Esophagus muscularis mucosa (tissue), 4 donors: ENCODE measurements at regions of chr1 and their contacts with region 1.

Region 1: DNA sequence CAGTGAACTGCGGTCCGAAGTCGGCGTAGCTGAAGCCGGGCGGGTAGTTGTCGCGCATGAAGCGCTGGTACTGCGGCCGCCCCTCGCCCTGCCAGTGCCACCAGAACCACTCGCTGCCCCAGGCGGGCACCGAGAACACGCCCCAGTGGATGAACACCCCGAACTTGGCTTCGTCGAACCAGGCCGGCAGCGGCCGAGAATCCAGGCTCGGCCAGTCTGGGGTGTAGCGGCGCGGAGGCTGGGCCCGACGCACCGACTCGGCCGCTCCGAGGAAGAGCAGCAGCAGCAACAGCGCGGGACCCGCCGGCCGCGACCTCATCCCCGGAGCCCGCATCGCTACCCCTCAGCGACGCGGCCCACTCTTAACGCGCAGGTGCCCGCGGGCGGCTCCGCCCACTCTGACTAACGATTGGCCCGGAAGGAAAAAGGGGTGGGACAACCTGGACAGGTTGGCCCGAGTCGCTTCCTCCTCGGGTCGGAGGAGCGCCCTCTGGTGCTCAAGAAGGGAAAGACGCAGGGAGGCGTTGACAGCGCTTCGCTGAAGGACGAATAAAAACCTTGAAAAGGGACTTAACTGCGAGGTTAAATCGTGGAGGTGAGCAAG is at the start of gene FUCA1:
- DNase-seq: peak; percentile 98
- H3K4me3 ChIP-seq: peak within 1 kb of the TSS; percentile 72 to 92 (median 86)
- H3K27ac ChIP-seq: peak within 1 kb of the TSS; percentile 57 to 82 (median 77)
- H3K4me1 ChIP-seq: peaks cover 17 to 34% (median 22%) of the 10 kb centered on the region in 4 donors
- H3K27me3 ChIP-seq: no peaks in the 10 kb centered on the region
- CTCF ChIP-seq: peak; percentile 94 to 96 (median 96)
- EP300 ChIP-seq: no peak
- POLR2A ChIP-seq: peak; percentile 66
- total RNA-seq, gene FUCA1: 20.0 to 25.9 (median 25.2) TPM

Region 2: DNA sequence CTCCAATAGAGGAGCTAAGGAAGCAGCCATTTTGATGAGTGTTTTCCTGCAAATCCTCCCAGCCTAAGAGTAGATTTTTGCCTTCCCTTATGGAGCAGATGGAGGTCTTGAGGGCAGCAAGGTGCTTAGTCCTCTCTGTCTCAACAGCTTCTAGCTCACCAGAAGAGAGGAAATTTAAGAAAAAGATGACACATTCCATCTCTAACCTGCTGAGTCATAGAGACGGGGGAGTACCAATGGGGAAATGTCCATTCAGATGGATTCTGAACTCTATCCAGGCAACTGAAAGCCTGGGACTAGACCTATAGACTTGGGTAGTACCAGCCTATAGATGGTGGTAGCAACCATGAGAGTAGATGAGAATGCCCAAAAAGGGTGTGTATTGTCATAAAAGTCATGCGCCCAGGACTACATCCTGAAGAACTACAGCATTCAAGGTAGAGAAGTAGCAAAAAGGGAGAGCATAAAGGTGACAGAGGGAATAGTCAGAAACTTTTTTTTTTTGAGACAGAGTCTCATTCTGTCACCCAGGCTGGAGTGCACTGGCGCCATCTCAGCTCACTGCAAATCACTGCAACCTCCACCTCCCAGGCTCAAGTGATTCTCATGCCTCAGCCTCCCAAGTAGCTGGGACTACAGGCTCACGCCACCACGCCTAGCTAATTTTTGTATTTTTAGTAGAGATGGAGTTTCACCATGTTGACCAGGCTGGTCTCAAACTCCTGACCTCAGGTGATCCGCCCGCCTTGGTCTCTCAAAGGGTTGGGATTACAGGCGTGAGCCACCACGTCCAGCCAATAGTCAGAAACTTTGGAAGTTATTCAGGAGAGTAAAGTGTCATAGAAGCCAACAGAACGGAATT is 135.5 kb before region 1 on chr1:
- intact Hi-C with region 1: no loop called
- DNase-seq: no peak
- H3K4me3 ChIP-seq: no peak overlapping the region
- H3K27ac ChIP-seq: no peak overlapping the region
- H3K4me1 ChIP-seq: peaks cover under 1 to 5% (median 5%) of the 10 kb centered on the region in 4 donors
- H3K27me3 ChIP-seq: no peaks in the 10 kb centered on the region
- CTCF ChIP-seq: no peak
- EP300 ChIP-seq: no peak
- POLR2A ChIP-seq: no peak

Region 3: DNA sequence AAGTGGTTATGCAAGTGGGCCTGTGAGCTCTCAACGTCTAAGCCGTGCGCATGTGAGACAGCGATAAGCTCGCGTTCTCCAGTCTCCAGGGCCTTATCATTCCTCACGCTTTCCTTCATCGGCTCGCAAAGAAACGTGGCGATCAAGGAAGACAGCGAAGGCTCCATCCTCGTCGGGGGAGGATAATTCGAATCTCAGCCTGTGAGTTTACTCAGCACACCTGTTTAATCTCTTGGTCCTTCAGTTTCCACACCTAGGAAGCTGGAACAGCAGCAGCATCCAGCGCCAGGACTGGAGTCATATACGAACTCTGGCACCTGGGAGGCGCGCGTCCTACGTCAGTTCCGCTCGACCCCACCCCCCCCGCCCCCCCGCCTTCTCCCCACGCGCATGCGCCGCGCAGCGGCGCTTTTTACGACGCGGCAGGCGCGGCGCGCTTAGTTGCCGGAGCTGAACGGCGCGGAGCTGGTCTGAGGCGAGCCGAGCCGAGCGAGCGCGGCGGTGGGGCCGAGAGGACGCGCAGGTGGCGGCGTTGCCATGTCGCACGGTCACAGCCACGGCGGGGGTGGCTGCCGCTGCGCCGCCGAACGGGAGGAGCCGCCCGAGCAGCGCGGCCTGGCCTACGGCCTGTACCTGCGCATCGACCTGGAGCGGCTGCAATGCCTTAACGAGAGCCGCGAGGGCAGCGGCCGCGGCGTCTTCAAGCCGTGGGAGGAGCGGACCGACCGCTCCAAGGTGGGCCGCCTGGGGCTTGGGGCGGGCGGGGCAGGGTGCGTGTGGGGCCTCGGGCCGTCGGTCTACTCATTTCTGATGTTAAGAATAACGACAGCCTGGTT is 89.9 kb before region 1 on chr1 and contains the start of gene PITHD1:
- intact Hi-C with region 1: loop called (anchors 5 kb)
- DNase-seq: peak; percentile 95
- H3K4me3 ChIP-seq: peak within 1 kb of the TSS; percentile 75 to 100 (median 96)
- H3K27ac ChIP-seq: peak within 1 kb of the TSS; percentile 86 to 95 (median 91)
- H3K4me1 ChIP-seq: peaks cover 20 to 43% (median 30%) of the 10 kb centered on the region in 4 donors
- H3K27me3 ChIP-seq: no peaks in the 10 kb centered on the region
- CTCF ChIP-seq: no peak
- EP300 ChIP-seq: peak; percentile 3
- POLR2A ChIP-seq: peak; percentile 73
- total RNA-seq, gene PITHD1: 43.6 to 66.6 (median 56.0) TPM

Region 4: DNA sequence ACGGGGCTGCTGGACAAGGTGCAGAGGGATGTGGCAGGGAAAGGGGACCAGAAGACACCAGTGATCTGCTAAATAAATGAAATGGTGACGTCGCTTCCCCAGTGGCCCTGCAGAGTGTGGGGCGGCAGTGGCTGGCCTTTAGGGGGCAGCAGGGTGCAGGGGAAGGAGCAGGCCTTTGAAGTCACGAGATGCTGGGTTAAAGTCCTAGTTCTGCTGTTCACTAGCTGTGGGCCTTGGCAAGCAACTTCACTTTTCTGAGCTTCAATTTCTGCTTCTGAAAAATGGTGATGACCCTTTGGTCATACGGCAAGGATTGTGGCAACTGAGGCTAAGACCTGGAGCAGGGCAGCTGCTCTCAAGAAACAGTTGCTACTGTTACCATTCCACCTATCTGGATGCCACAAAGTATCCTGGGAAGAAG is 58.3 kb before region 1 on chr1:
- intact Hi-C with region 1: loop called (anchors 5 kb)
- DNase-seq: no peak
- H3K4me3 ChIP-seq: no peak overlapping the region
- H3K27ac ChIP-seq: peak overlapping the region in 1 of 4 donors; percentile 28
- H3K4me1 ChIP-seq: peaks cover 0 to 6% (median 3%) of the 10 kb centered on the region in 4 donors
- H3K27me3 ChIP-seq: no peaks in the 10 kb centered on the region
- CTCF ChIP-seq: peak; percentile 71 to 80 (median 77)
- EP300 ChIP-seq: no peak
- POLR2A ChIP-seq: no peak

Region 5: DNA sequence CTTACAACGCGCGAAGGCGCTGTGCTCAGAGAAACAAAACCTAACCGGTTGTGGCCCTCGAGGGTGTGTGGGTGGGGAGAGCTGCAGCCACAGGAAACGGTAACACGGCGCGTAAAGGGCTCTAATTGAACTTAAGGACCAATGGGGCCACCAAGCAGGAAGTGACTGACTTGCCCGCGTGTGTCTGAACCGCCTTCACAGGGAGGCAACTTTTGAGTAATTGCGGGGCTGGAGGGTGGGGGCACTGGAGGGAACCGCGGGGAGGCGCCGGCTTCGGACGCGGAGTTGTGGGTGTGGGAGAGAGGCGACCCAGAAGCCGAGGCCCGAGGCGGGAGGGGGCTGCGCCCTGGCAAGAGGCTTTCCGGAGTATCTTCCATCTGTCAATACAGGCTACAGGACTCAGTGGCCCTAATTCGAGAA is 91.0 kb after region 1 on chr1:
- intact Hi-C with region 1: no loop called
- DNase-seq: peak; percentile 96
- H3K4me3 ChIP-seq: peak overlapping the region; percentile 70 to 97 (median 80)
- H3K27ac ChIP-seq: peak overlapping the region; percentile 97 to 100 (median 100)
- H3K4me1 ChIP-seq: peaks cover 37 to 63% (median 47%) of the 10 kb centered on the region in 4 donors
- H3K27me3 ChIP-seq: no peaks in the 10 kb centered on the region
- CTCF ChIP-seq: peak; percentile 32 to 68 (median 47)
- EP300 ChIP-seq: no peak
- POLR2A ChIP-seq: no peak

Region 6: DNA sequence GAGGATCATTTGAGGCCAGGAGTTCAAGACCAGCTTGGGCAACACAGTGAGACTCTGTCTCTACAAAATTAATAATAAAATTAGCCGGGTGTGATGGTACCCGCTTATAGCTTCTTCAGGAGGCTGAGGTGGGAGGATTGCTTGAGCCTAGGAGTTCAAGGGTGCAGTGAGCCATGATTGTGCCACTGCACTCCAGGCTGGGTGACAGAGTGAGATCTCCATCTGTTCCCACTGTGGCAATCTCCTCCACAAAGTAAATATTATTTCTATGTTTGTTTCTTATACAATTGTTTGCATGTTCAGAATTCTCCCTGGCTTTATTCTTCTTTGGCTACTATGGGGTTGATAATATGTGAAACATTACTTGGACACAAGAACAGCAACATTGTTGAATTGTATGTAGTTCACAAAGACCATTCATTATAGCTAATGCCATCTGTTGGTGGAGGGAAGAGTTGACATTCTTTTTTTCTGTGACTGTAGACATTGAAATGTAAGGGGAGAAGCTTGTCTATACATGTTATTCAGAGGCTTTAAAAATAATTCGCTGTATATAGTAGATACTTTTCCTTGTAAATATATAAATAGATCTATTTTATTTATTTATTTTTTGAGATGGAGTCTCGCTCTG is 159.9 kb after region 1 on chr1:
- intact Hi-C with region 1: loop called (anchors 5 kb)
- DNase-seq: no peak
- H3K4me3 ChIP-seq: no peak overlapping the region
- H3K27ac ChIP-seq: no peak overlapping the region
- H3K4me1 ChIP-seq: peaks cover 0 to 13% (median 11%) of the 10 kb centered on the region in 4 donors
- H3K27me3 ChIP-seq: no peaks in the 10 kb centered on the region
- CTCF ChIP-seq: peak; percentile 67 to 69 (median 67)
- EP300 ChIP-seq: no peak
- POLR2A ChIP-seq: no peak